ENCODE measurements at regions of chr3 and their contacts with region 1.

Region 1: DNA sequence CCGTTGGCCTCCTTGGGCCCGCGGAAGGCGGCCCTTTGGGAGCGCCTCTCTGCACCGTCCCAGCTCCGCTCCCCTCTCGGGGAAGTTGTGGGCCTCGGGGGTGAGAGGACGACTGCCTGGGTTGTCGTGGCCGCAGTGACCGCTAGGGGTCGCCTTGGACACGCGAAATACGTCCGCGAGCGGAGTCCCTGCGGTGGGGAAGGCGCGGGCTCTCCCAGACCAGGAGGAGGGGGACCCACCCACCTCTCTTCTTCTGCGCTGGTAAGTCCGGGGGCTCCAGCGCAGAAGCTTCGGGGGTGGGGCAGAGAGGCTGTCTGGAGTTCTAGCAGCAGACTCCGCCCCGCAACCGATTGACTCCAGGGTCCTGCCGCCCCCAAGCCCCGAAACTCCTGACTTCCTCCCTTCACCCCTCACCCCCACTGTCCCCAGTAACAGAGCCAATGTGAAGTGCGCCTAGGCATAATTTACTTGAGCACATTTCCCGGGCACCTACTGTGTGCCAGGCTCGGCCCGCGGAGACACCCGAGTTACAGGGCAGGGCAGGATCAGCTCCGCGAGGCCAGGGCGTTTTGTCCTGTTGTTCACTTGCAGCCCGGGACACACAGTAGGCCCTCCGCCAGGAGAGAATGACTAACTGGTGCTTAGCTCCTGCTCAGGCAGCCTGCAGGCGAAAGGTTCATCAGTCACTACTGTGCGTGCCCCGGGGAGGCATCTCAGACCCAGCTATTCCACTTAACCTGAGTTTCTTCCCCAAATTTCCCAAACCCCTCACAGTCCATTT is 32.8 kb downstream of the DNASE1L3 start:
- DNase-seq: peak; percentile 91
- ATAC-seq: peak; percentile 96
- H3K4me3 Mint-ChIP-seq: peak overlapping the region; percentile 81
- H3K27ac Mint-ChIP-seq: no peak overlapping the region
- H3K4me1 Mint-ChIP-seq: peaks cover 24% of the 10 kb centered on the region
- H3K27me3 Mint-ChIP-seq: no peaks in the 10 kb centered on the region
- CTCF ChIP-seq: peak; percentile 27

Region 2: DNA sequence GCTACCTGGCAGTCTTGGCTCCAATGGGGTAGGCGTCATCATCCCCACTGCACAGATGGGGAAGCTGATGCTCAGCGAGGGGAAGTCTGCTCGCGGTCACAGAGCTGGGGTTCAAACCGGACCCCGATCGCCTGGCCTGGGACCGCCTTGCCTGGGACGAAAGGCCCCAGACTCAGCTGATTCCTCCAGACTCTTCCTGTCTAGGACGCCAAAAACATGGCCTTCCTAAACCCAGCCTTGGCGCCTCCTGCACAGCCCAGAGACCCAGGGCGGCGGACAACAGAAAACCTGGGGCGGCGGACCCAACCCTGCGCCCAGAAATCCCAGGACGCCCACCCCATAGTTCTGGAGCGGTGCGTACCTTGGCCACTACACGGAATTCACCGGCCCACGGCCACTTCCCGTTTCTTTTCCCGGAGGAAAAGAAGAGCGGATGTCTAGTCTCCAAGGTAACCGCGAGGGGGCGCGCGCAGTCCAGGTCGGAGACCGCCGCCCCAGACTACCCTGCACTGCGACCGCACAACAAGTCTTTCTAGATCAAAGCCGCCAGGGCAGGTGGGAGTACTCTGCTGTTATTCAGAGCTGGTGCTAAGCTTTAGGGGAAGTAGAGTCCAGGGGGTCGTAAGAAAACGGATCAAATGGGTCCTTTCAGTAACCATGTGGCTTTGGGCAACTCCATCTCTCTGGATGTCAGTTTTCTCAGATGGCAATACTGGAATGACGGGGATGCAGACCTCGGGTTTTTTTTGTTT is 1007.9 kb before region 1 on chr3:
- CTCF ChIA-PET with region 1: no interaction called
- POLR2A ChIA-PET with region 1: no interaction called
- intact Hi-C with region 1: loop called (anchors 10 kb)
- DNase-seq: peak; percentile 67
- ATAC-seq: peak; percentile 66
- H3K4me3 Mint-ChIP-seq: peak overlapping the region; percentile 74
- H3K27ac Mint-ChIP-seq: no peak overlapping the region
- H3K4me1 Mint-ChIP-seq: peaks cover 11% of the 10 kb centered on the region
- H3K27me3 Mint-ChIP-seq: peaks cover 28% of the 10 kb centered on the region
- CTCF ChIP-seq: peak; percentile 81

Region 3: DNA sequence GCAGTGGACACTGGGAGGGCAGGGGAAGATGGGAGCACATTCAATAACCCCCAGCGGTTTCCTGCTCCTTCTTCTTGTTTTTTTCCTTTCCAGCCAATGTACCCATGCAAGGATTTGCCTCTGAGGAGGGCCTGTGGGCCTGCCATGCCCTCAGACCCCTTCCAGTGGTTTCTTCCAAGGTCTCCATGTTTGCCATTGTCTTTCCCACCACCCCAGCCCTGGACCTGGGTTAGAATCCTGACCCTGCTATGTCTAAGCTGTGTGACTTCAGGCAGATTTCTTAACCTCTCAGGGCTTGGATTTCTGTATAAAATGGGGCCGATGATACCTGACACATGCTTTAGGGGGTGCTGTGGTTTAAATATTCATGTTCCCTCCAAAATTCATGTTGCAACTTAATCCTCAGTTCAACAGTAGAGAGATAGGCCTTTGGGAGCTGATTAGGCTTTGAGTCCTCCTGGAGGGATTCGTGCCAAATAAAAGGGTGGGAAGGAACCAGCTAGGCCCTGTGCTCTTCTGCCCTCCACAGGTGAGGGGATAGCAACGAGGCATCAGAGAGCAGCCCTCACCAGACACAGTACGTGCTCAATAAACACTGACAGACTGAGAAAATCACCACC is 216.0 kb before region 1 on chr3:
- CTCF ChIA-PET with region 1: no interaction called
- POLR2A ChIA-PET with region 1: no interaction called
- intact Hi-C with region 1: loop called (anchors 5 kb)
- DNase-seq: no peak
- ATAC-seq: no peak
- H3K4me3 Mint-ChIP-seq: no peak overlapping the region
- H3K27ac Mint-ChIP-seq: no peak overlapping the region
- H3K4me1 Mint-ChIP-seq: peaks cover 19% of the 10 kb centered on the region
- H3K27me3 Mint-ChIP-seq: no peaks in the 10 kb centered on the region
- CTCF ChIP-seq: no peak

Region 4: GRCh38 chr3:58188173-58188564 is 10.2 kb after region 1 on chr3:
- CTCF ChIA-PET with region 1: interaction called, 29 read pairs
- POLR2A ChIA-PET with region 1: no interaction called
- intact Hi-C with region 1: no loop called
- DNase-seq: no peak
- ATAC-seq: peak; percentile 18
- H3K4me3 Mint-ChIP-seq: no peak overlapping the region
- H3K27ac Mint-ChIP-seq: peak overlapping the region; percentile 61
- H3K4me1 Mint-ChIP-seq: peaks cover 7% of the 10 kb centered on the region
- H3K27me3 Mint-ChIP-seq: no peaks in the 10 kb centered on the region
- CTCF ChIP-seq: no peak

Region 5: GRCh38 chr3:58249358-58250092 is 71.6 kb after region 1 on chr3:
- CTCF ChIA-PET with region 1: no interaction called
- POLR2A ChIA-PET with region 1: interaction called, 10 read pairs
- intact Hi-C with region 1: no loop called
- DNase-seq: no peak
- ATAC-seq: peak; percentile 94
- H3K4me3 Mint-ChIP-seq: peak overlapping the region; percentile 49
- H3K27ac Mint-ChIP-seq: peak overlapping the region; percentile 50
- H3K4me1 Mint-ChIP-seq: peaks cover 34% of the 10 kb centered on the region
- H3K27me3 Mint-ChIP-seq: no peaks in the 10 kb centered on the region
- CTCF ChIP-seq: no peak

Region 6: GRCh38 chr3:58398669-58399333 is 220.9 kb after region 1 on chr3:
- CTCF ChIA-PET with region 1: no interaction called
- POLR2A ChIA-PET with region 1: no interaction called
- intact Hi-C with region 1: no loop called
- DNase-seq: no peak
- ATAC-seq: no peak
- H3K4me3 Mint-ChIP-seq: no peak overlapping the region
- H3K27ac Mint-ChIP-seq: no peak overlapping the region
- H3K4me1 Mint-ChIP-seq: peaks cover 28% of the 10 kb centered on the region
- H3K27me3 Mint-ChIP-seq: no peaks in the 10 kb centered on the region
- CTCF ChIP-seq: no peak

Region 7: DNA sequence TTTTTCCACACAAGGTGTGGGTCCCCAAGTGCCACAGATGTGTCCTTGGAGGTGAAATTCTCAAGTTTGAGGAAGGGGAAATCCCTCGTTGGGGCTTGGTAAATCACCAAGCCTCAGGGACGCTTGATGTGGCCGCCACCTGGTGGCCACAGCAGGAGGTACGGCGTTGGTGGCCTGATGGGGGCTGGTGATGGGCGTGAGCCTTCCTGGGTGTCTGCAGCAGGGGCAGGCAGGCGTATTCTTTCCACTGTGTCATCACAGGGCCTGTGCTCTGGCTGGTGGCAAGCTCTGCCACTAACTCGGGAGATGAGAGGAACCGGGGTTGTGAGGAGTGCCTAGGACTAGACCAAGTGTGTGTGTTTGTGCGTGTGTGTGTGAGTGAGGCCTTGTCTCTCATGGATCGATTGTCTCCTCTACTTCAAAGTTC is 354.9 kb after region 1 on chr3:
- CTCF ChIA-PET with region 1: interaction called, 3 read pairs
- POLR2A ChIA-PET with region 1: no interaction called
- intact Hi-C with region 1: loop called (anchors 2 kb)
- DNase-seq: peak; percentile 75
- ATAC-seq: peak; percentile 100
- H3K4me3 Mint-ChIP-seq: no peak overlapping the region
- H3K27ac Mint-ChIP-seq: no peak overlapping the region
- H3K4me1 Mint-ChIP-seq: peaks cover 7% of the 10 kb centered on the region
- H3K27me3 Mint-ChIP-seq: no peaks in the 10 kb centered on the region
- CTCF ChIP-seq: no peak

Measured in activated B cell treated with CpG ODN at 0.5 μM for 24 hours (primary cell).